B cell (primary cell): ENCODE measurements at regions of chr3 and their contacts with region 1.

Region 1: DNA sequence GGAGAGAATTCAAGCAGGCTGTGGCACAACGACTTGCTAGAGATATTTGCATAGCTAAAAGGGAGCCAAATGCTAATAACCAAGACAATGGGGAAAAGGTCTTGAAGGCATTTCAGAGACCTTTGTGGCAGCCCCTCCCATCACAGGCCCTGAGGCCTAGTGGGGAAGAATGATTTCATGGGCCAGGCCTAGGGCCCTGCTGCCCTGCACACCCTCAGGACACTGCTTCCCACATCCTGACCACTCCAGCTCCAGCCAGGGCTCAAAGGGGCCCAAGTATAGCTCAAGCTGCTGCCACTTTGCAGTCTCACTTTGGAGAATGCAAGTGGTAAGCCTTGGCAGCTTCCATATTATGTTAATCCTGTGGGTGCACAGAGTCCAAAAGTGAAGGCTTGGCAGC is 21.5 kb upstream of the PTPN23 start:
- DNase-seq: no peak
- ATAC-seq: no peak
- H3K4me3 ChIP-seq: no peak overlapping the region
- H3K4me3 Mint-ChIP-seq: no peak overlapping the region
- H3K27ac ChIP-seq: no peak overlapping the region
- H3K27ac Mint-ChIP-seq: no peak overlapping the region
- H3K4me1 ChIP-seq: peaks cover 8% of the 10 kb centered on the region in 2 donors
- H3K4me1 Mint-ChIP-seq: peaks cover 8% of the 10 kb centered on the region
- H3K27me3 ChIP-seq: no peaks in the 10 kb centered on the region
- H3K27me3 Mint-ChIP-seq: no peaks in the 10 kb centered on the region
- CTCF ChIP-seq: no peak

Region 2: GRCh38 chr3:47496892-47497291 is 137.6 kb after region 1 on chr3:
- CTCF ChIA-PET with region 1: no interaction called
- POLR2A ChIA-PET with region 1: no interaction called
- intact Hi-C with region 1: no loop called
- DNase-seq: no peak
- ATAC-seq: no peak
- H3K4me3 ChIP-seq: no peak overlapping the region
- H3K4me3 Mint-ChIP-seq: no peak overlapping the region
- H3K27ac ChIP-seq: no peak overlapping the region
- H3K27ac Mint-ChIP-seq: no peak overlapping the region
- H3K4me1 ChIP-seq: peaks cover 14 to 15% of the 10 kb centered on the region in 2 donors
- H3K4me1 Mint-ChIP-seq: peaks cover 15% of the 10 kb centered on the region
- H3K27me3 ChIP-seq: no peaks in the 10 kb centered on the region
- H3K27me3 Mint-ChIP-seq: no peaks in the 10 kb centered on the region
- CTCF ChIP-seq: no peak

Region 3: GRCh38 chr3:47791193-47791855 is 432.0 kb after region 1 on chr3:
- CTCF ChIA-PET with region 1: no interaction called
- POLR2A ChIA-PET with region 1: no interaction called
- intact Hi-C with region 1: no loop called
- DNase-seq: no peak
- ATAC-seq: no peak
- H3K4me3 ChIP-seq: no peak overlapping the region
- H3K4me3 Mint-ChIP-seq: no peak overlapping the region
- H3K27ac ChIP-seq: no peak overlapping the region
- H3K27ac Mint-ChIP-seq: peak overlapping the region; percentile 4
- H3K4me1 ChIP-seq: no peaks in the 10 kb centered on the region
- H3K4me1 Mint-ChIP-seq: peaks cover 1% of the 10 kb centered on the region
- H3K27me3 ChIP-seq: no peaks in the 10 kb centered on the region
- H3K27me3 Mint-ChIP-seq: no peaks in the 10 kb centered on the region
- CTCF ChIP-seq: no peak

Region 4: DNA sequence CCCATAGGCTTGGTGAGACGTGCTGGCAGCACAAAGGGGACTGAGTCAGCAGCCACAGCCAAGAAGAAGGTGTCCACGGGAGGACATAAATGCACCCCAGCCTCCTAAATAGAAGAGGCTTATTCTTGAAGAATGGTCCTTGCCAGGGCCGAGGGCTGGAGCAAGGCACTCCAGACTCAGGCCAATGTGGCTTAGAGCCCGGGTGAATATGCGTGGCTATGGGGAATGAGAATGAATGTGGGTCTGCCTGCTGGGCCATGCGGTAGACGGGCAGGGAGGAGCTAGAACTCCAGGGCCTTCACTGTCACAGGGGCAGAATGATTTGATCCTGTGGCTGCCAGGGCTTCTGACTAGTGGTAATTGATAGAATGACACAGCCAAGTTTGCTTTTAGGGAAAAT is 477.7 kb after region 1 on chr3:
- CTCF ChIA-PET with region 1: no interaction called
- POLR2A ChIA-PET with region 1: no interaction called
- intact Hi-C with region 1: no loop called
- DNase-seq: no peak
- ATAC-seq: no peak
- H3K4me3 ChIP-seq: no peak overlapping the region
- H3K4me3 Mint-ChIP-seq: no peak overlapping the region
- H3K27ac ChIP-seq: no peak overlapping the region
- H3K27ac Mint-ChIP-seq: peak overlapping the region; percentile 50
- H3K4me1 ChIP-seq: no peaks in the 10 kb centered on the region
- H3K4me1 Mint-ChIP-seq: peaks cover 2% of the 10 kb centered on the region
- H3K27me3 ChIP-seq: no peaks in the 10 kb centered on the region
- H3K27me3 Mint-ChIP-seq: no peaks in the 10 kb centered on the region
- CTCF ChIP-seq: no peak

Region 5: GRCh38 chr3:48318783-48319468 is 959.6 kb after region 1 on chr3:
- CTCF ChIA-PET with region 1: no interaction called
- POLR2A ChIA-PET with region 1: interaction called, 10 read pairs
- intact Hi-C with region 1: no loop called
- DNase-seq: no peak
- ATAC-seq: no peak
- H3K4me3 ChIP-seq: no peak overlapping the region
- H3K4me3 Mint-ChIP-seq: no peak overlapping the region
- H3K27ac ChIP-seq: no peak overlapping the region
- H3K27ac Mint-ChIP-seq: no peak overlapping the region
- H3K4me1 ChIP-seq: no peaks in the 10 kb centered on the region
- H3K4me1 Mint-ChIP-seq: no peaks in the 10 kb centered on the region
- H3K27me3 ChIP-seq: no peaks in the 10 kb centered on the region
- H3K27me3 Mint-ChIP-seq: peaks cover 15% of the 10 kb centered on the region
- CTCF ChIP-seq: no peak